Activated naive CD4-positive, alpha-beta T cell treated with anti-CD3 and anti-CD28 coated beads for 36 hours (primary cell): ENCODE measurements at regions of chr13 and their contacts with region 1.

Region 1: GRCh38 chr13:75704579-75705320 is 68.6 kb downstream of the LMO7 start:
- DNase-seq: no peak
- H3K4me3 Mint-ChIP-seq: no peak overlapping the region
- H3K27ac Mint-ChIP-seq: no peak overlapping the region
- H3K4me1 Mint-ChIP-seq: peaks cover 14% of the 10 kb centered on the region
- H3K27me3 Mint-ChIP-seq: no peaks in the 10 kb centered on the region

Region 2: GRCh38 chr13:75766636-75767035 is 61.9 kb after region 1 on chr13:
- CTCF ChIA-PET with region 1: interaction called, 3 read pairs
- intact Hi-C with region 1: loop called (anchors 1 kb)
- DNase-seq: peak; percentile 18
- H3K4me3 Mint-ChIP-seq: no peak overlapping the region
- H3K27ac Mint-ChIP-seq: peak overlapping the region; percentile 63
- H3K4me1 Mint-ChIP-seq: peaks cover 74% of the 10 kb centered on the region
- H3K27me3 Mint-ChIP-seq: peaks cover 4% of the 10 kb centered on the region